H1 (cell line): ENCODE measurements at regions of chr14 and their contacts with region 1.

Region 1: GRCh38 chr14:67619446-67620216 is at the start of gene ARG2:
- DNase-seq: peak; percentile 91 to 99
- H3K4me3 ChIP-seq: peak within 1 kb of the TSS; percentile 83 to 87 (median 84)
- H3K27ac ChIP-seq: peak within 1 kb of the TSS; percentile 58; the same call in 1 of the 2 replicates
- H3K4me1 ChIP-seq: peaks cover 0 to 6% (median 5%) of the 10 kb centered on the region in 4 experiments; a peak in 5 of 7 replicates
- H3K27me3 ChIP-seq: peaks cover 0 to 6% (median 2%) of the 10 kb centered on the region in 4 experiments; a peak in 4 of 7 replicates
- CTCF ChIP-seq: peak in 2 of 3 experiments; percentile 5 to 17; a peak in 2 of 4 replicates
- EP300 ChIP-seq: peak in 1 of 2 experiments; percentile 9; a peak in 1 of 3 replicates
- POLR2A ChIP-seq: peak; percentile 77 to 81; a peak in 2 of 3 replicates
- RAD21 ChIP-seq: no peak
- total RNA-seq, gene ARG2: 49.0 and 49.9 TPM in 2 replicates

Region 2: GRCh38 chr14:67510121-67510520 is 109.5 kb before region 1 on chr14:
- CTCF ChIA-PET with region 1: no interaction called
- POLR2A ChIA-PET with region 1: no interaction called
- DNase-seq: no peak
- H3K4me3 ChIP-seq: no peak overlapping the region
- H3K27ac ChIP-seq: no peak overlapping the region
- H3K4me1 ChIP-seq: peaks cover 0 to 6% (median 3%) of the 10 kb centered on the region in 4 experiments; a peak in 3 of 7 replicates
- H3K27me3 ChIP-seq: peaks cover 0 to 24% (median 13%) of the 10 kb centered on the region in 4 experiments; a peak in 6 of 7 replicates
- CTCF ChIP-seq: no peak
- EP300 ChIP-seq: no peak
- POLR2A ChIP-seq: no peak
- RAD21 ChIP-seq: no peak

Region 3: DNA sequence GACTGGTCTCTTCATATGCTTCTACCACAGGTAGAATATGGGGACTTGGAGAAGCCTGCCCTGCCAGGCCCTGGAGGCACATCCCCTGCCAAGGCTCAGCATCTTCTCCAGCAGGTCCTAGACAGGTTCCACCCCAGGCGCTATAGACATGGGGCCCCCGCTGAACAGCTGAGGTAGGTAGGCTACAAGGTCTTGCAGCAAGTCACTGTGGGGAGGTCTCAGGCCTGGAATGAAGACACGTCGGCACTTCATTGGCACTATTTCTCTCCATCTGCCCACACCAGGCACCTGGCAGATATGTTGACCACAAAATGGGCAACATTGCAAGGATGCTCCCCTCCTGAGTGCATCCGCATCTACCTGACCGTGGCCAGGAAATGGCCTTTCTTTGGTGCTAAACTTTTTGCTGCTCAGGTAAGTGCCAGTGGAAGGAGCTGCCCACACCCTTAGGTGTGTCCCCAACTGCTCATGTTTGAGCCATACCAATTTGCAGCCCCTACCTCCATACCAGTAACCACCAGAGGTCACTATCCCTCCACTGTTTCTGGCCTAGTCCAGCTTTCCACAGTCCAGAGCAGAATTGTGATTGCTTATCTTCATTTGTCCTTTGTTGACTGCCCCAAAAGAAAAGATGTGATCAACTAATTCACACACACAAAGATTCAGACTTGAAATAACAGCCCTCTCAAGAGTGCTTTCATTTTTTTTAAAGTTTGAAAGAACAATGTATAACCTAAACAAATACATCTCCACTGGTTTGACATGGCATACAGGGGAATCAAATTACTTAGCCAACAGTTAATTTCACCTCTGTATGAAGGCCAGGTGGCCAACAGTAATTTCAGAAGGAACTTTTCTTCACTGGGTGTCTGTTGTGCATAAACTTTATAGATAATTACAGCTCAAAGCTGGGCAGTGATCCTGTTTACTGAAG is 35.7 kb before region 1 on chr14:
- CTCF ChIA-PET with region 1: interaction called, 27 read pairs
- POLR2A ChIA-PET with region 1: no interaction called
- DNase-seq: no peak
- H3K4me3 ChIP-seq: no peak overlapping the region
- H3K27ac ChIP-seq: no peak overlapping the region
- H3K4me1 ChIP-seq: no peaks in the 10 kb centered on the region
- H3K27me3 ChIP-seq: no peaks in the 10 kb centered on the region
- CTCF ChIP-seq: peak; percentile 54 to 83 (median 80)
- EP300 ChIP-seq: no peak
- POLR2A ChIP-seq: no peak
- RAD21 ChIP-seq: peak; percentile 89 to 90

Region 4: DNA sequence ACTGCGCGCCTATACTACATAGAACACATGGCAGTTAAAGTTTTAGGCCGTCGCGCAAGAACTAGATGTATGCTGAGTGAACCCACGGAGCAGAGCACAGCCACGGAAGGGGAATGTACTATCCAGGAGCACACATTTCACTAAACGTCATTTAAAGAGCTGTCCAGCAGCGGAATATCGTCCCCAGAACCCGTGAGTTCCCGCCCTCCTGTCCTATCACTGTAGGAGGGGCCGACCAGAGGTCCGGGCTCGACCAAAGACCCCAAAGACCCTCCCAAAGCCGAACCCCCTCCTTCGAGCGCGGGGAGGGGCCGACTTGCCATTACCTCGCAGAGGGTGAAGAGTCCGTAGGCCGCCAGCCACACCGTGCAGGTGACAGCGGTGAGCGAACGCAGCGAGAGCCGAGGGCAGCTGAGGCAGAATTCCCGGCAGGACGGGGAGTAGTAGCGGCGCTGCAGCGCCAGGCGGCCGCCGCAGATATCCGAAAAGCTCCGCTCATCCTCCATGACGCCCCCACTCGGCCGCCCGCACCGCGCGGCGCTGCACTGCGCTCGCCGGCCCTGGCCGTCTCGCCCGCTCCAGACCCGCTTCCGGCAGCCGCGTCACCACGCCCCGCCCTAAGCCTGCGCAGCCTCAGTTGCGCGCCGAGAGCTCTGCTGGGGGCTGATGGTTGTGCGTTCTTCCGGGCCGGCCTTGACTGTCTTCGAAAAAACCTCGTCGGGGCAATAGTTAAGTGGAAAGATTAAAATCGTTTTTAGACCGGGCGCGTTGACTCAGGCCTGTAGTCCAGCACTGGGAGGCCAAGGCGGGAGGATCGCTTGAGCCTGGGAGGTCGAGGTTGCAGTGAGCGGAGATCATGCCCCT is 19.7 kb before region 1 on chr14 and contains the start of gene PIGH:
- CTCF ChIA-PET with region 1: interaction called, 11 read pairs
- POLR2A ChIA-PET with region 1: interaction called, 13 read pairs
- DNase-seq: peak; percentile 46 to 95
- H3K4me3 ChIP-seq: peak within 1 kb of the TSS; percentile 60 to 79 (median 70)
- H3K27ac ChIP-seq: no peak within 1 kb of the TSS
- H3K4me1 ChIP-seq: no peaks in the 10 kb centered on the region; a peak in 1 of 7 replicates
- H3K27me3 ChIP-seq: peaks cover 4 to 41% (median 22%) of the 10 kb centered on the region in 4 experiments
- CTCF ChIP-seq: peak; percentile 53 to 97 (median 66)
- EP300 ChIP-seq: no peak
- POLR2A ChIP-seq: peak in 1 of 2 experiments; percentile 59; a peak in 2 of 3 replicates
- RAD21 ChIP-seq: peak; percentile 37 to 51; a peak in 3 of 4 replicates
- total RNA-seq, gene PIGH: 6.2 and 7.2 TPM in 2 replicates

Region 5: DNA sequence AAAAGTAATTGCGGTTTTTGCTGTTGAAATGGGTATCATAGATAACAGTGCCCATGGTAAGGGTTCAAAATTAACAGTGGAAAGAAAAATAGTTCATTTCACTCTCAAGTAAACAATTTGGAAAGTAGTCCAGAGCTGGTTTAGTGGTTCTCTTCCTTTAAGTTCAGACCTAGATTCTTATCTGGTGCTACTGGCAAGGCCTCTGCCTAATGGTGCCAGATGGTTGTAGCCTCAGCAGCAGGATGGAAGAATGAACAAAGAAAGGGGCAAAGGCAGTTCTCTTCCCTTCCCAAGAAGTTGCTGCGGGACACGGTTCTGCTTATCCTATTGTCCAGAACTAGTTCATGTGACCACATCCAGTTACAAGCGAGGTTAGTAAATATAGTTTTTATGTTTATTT is 10.6 kb after region 1 on chr14:
- CTCF ChIA-PET with region 1: interaction called, 15 read pairs
- POLR2A ChIA-PET with region 1: interaction called, 11 read pairs
- DNase-seq: no peak
- H3K4me3 ChIP-seq: no peak overlapping the region
- H3K27ac ChIP-seq: no peak overlapping the region
- H3K4me1 ChIP-seq: no peaks in the 10 kb centered on the region
- H3K27me3 ChIP-seq: no peaks in the 10 kb centered on the region
- CTCF ChIP-seq: no peak
- EP300 ChIP-seq: no peak
- POLR2A ChIP-seq: no peak
- RAD21 ChIP-seq: no peak

Region 6: GRCh38 chr14:67636361-67636919 is 16.8 kb after region 1 on chr14:
- CTCF ChIA-PET with region 1: interaction called, 15 read pairs
- POLR2A ChIA-PET with region 1: interaction called, 8 read pairs
- DNase-seq: no peak
- H3K4me3 ChIP-seq: no peak overlapping the region
- H3K27ac ChIP-seq: no peak overlapping the region
- H3K4me1 ChIP-seq: no peaks in the 10 kb centered on the region
- H3K27me3 ChIP-seq: no peaks in the 10 kb centered on the region
- CTCF ChIP-seq: no peak
- EP300 ChIP-seq: no peak
- POLR2A ChIP-seq: no peak
- RAD21 ChIP-seq: no peak

Region 7: DNA sequence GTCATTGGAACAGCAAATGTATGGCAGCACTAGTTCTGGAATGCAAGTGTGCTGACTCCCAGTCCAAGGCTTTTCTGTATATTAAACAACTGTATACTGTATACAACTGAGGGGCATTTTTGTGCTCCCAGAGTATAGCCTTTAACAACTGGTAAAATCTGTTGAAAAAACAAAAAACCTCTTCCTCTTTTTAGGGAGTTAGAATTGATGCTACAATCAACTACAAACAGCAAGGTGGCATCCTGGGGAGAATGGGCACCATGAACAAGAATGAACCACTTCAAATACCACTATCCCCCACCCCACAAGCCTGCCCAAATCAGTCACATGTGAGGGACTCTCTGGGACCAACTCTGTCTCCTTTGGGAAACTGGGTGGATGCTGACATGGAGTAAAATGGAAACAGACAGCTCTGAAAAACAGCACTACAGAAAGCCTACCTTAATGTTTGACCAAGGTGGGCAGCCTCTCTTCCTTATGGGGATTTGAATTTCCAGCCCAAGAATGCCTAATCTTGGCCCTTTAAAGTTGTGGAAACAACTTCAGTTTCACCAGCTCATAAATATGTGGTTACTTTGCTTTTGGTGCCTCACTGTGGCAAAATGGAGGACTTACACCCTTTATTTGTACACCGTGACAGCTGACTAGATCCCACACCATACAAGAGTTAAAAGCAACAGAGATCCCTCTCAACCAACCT is 47.3 kb after region 1 on chr14:
- CTCF ChIA-PET with region 1: interaction called, 11 read pairs
- POLR2A ChIA-PET with region 1: interaction called, 4 read pairs
- DNase-seq: no peak
- H3K4me3 ChIP-seq: no peak overlapping the region
- H3K27ac ChIP-seq: no peak overlapping the region
- H3K4me1 ChIP-seq: no peaks in the 10 kb centered on the region
- H3K27me3 ChIP-seq: no peaks in the 10 kb centered on the region
- CTCF ChIP-seq: peak in 2 of 3 experiments; percentile 71; a peak in 3 of 4 replicates
- EP300 ChIP-seq: no peak
- POLR2A ChIP-seq: no peak
- RAD21 ChIP-seq: peak; percentile 81 to 82

Region 8: DNA sequence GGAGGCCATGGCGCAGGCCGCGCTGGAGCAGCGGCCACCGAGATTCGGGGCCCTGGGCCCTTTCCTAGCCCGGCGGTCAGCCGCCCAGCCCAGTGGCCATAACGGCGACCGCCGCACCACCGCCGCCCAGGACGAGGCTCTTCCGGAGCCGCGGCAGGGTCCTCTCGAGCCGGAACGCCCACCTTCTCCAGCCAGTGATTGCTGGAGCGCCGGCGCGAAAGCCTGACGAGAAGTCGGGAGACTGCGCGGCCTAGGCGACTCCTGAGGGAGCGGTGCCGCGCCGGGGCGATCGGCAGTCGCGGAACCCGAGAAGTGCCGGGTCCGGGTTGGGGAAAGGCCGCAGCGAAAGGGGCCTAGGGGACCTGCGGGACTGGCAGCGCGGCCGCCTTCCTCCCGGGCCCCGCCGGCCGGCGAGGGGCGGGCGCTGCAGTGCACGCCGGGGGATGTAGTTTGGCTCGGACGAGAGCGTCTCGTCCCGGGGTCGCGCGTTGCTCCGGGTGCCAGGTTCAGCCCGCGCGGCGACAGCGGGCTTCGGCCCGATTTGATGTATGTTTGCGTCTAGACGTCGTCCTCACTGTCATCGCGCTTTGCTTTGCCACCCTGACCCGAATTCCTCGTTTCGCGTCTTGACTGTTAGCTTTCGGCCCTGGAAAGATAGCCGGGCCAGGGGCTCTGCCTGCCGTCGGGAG is 55.0 kb after region 1 on chr14 and contains the start of gene VTI1B:
- CTCF ChIA-PET with region 1: interaction called, 5 read pairs
- POLR2A ChIA-PET with region 1: interaction called, 16 read pairs
- DNase-seq: peak in 1 of 2 experiments; percentile 89
- H3K4me3 ChIP-seq: peak within 1 kb of the TSS; percentile 77 to 96 (median 80)
- H3K27ac ChIP-seq: peak within 1 kb of the TSS; percentile 99
- H3K4me1 ChIP-seq: no peaks in the 10 kb centered on the region; a peak in 2 of 7 replicates
- H3K27me3 ChIP-seq: no peaks in the 10 kb centered on the region
- CTCF ChIP-seq: peak in 1 of 3 experiments; percentile 9; a peak in 1 of 4 replicates
- EP300 ChIP-seq: no peak
- POLR2A ChIP-seq: peak; percentile 63 to 83
- RAD21 ChIP-seq: no peak
- total RNA-seq, gene VTI1B: 98.7 and 104 TPM in 2 replicates

Region 9: GRCh38 chr14:67729072-67729885 is 109.6 kb after region 1 on chr14:
- CTCF ChIA-PET with region 1: no interaction called
- POLR2A ChIA-PET with region 1: no interaction called
- DNase-seq: peak; percentile 51 to 77
- H3K4me3 ChIP-seq: peak overlapping the region in 3 of 4 experiments; percentile 13 to 37 (median 19); a peak in 4 of 8 replicates
- H3K27ac ChIP-seq: no peak overlapping the region
- H3K4me1 ChIP-seq: peaks cover 1 to 11% (median 6%) of the 10 kb centered on the region in 4 experiments; a peak in 5 of 7 replicates
- H3K27me3 ChIP-seq: no peaks in the 10 kb centered on the region; a peak in 1 of 7 replicates
- CTCF ChIP-seq: no peak
- EP300 ChIP-seq: no peak
- POLR2A ChIP-seq: peak in 1 of 2 experiments; percentile 66; a peak in 2 of 3 replicates
- RAD21 ChIP-seq: 0 out of 4 replicates have a peak, but pooled peaks of 1 of the 2 experiments have one; percentile 9

Region 10: DNA sequence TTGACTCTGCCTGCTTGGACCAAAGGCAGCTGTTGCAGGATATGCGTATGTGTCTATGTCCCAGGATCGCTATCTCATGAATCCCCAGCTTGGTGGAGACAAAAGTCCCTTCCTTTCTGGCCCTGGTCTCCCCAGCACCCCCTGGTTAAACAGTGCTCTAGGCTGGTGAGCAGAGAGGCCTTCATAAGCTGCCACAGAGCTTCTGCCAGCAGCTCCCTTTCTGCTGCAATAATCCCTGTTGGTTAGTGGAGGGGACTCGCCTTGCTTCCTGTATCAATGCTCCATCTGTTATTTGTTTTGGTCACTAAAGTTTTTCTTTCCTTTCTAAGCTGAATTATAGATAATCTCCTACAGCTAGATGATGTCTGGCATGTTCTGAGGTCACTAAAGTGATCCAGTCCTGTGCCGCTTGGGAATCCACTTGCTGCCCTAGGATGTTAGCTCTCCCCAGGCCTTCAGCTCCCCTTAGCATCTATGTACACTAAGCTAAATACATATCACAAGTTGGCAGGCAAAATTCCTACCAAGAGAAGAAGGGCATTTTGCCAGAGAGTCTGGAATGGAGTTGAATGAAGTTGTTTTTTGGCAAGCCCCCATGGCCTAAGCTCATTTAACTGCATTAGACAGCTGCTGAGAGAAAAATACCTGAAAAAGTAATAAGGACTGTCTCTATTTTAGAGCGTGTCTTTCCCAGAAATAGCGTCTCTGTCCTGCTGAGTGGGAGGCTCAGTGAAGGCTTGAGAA is 129.9 kb after region 1 on chr14:
- CTCF ChIA-PET with region 1: no interaction called
- POLR2A ChIA-PET with region 1: no interaction called
- DNase-seq: no peak
- H3K4me3 ChIP-seq: no peak overlapping the region
- H3K27ac ChIP-seq: no peak overlapping the region
- H3K4me1 ChIP-seq: no peaks in the 10 kb centered on the region
- H3K27me3 ChIP-seq: no peaks in the 10 kb centered on the region
- CTCF ChIP-seq: no peak
- EP300 ChIP-seq: no peak
- POLR2A ChIP-seq: no peak
- RAD21 ChIP-seq: no peak